Breast epithelium (tissue), 4 donors: ENCODE measurements at regions of chr11 and their contacts with region 1.

Region 1: GRCh38 chr11:57456960-57457642 is 3.2 kb upstream of the RTN4RL2 start:
- DNase-seq: peak; percentile 77 to 89
- H3K4me3 ChIP-seq: peak overlapping the region in 1 of 3 donors; percentile 72
- H3K27ac ChIP-seq: no peak overlapping the region
- H3K4me1 ChIP-seq: peaks cover 6 to 26% of the 10 kb centered on the region in 2 donors
- H3K27me3 ChIP-seq: peaks cover 0 to 19% of the 10 kb centered on the region in 2 donors
- CTCF ChIP-seq: peak; percentile 63 to 96 (median 92)
- POLR2A ChIP-seq: no peak

Region 2: DNA sequence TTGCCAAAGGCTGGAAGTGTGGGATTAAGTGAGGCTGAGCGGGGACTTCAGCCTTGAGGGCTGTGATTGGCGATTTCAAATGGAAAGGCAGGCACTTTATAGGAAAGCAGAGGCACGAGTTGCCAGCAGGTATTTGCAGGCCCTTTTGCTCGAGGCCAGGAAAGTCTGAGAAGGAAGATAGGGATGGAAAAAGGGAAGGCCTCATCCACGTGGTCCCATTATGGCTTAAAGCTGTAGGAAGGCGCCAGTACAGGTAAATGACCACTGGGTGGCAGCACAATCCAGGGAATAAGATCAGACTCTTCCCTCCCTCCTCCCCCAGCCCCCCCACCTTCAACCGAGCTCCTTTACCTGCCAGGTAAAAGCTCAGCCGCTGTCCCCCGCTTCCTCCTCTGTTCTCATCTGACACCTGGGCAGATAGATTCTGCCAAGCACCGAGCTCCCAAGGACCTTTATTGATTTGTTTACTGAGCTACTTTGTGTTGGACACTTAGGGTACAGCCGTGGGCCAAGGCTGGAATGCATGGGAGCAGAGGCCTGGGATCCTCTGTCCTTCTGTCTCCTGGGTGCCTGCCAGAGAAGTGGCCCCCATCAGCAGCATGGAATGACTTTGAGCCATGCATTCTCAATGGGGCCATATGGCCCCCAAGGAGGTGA is 111.4 kb before region 1 on chr11:
- intact Hi-C with region 1: loop called (anchors 10 kb)
- DNase-seq: peak; percentile 64 to 66
- H3K4me3 ChIP-seq: no peak overlapping the region
- H3K27ac ChIP-seq: no peak overlapping the region
- H3K4me1 ChIP-seq: no peaks in the 10 kb centered on the region
- H3K27me3 ChIP-seq: no peaks in the 10 kb centered on the region
- CTCF ChIP-seq: peak; percentile 44 to 67 (median 45)
- POLR2A ChIP-seq: no peak

Region 3: GRCh38 chr11:57527056-57527631 is 70.0 kb after region 1 on chr11:
- intact Hi-C with region 1: loop called (anchors 5 kb)
- DNase-seq: peak; percentile 56 to 76
- H3K4me3 ChIP-seq: no peak overlapping the region
- H3K27ac ChIP-seq: no peak overlapping the region
- H3K4me1 ChIP-seq: peaks cover 0 to 5% of the 10 kb centered on the region in 2 donors
- H3K27me3 ChIP-seq: no peaks in the 10 kb centered on the region
- CTCF ChIP-seq: peak; percentile 91 to 96 (median 95)
- POLR2A ChIP-seq: no peak

Region 4: DNA sequence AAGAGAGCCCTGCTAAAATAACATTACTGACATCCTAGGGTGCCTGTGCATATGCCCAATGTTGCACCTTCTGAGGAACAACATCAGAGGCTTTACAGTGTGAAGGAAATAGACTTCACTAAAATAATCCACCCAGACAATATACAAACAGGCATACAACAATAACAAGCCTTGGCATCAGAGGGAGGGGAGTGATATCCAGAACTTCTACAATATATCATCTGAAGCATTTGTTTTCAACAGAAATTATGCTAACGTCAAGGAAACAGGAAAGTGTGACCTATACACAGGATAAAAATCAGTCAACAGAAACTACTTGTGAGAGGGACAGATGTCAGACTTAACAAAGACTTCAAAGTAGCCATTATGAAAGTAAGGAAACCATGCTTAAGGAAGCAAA is 385.8 kb after region 1 on chr11:
- intact Hi-C with region 1: no loop called
- DNase-seq: no peak
- H3K4me3 ChIP-seq: no peak overlapping the region
- H3K27ac ChIP-seq: no peak overlapping the region
- H3K4me1 ChIP-seq: no peaks in the 10 kb centered on the region
- H3K27me3 ChIP-seq: peaks cover 0 to 2% of the 10 kb centered on the region in 2 donors
- CTCF ChIP-seq: no peak
- POLR2A ChIP-seq: no peak